ENCODE measurements at regions of chr3 and their contacts with region 1.

Region 1: GRCh38 chr3:839981-840380 is 252.8 kb upstream of the CNTN6 start:
- DNase-seq: no peak
- ATAC-seq: no peak
- H3K4me3 ChIP-seq: no peak overlapping the region
- H3K27ac ChIP-seq: no peak overlapping the region
- H3K4me1 ChIP-seq: no peaks in the 10 kb centered on the region
- H3K27me3 ChIP-seq: no peaks in the 10 kb centered on the region
- CTCF ChIP-seq: no peak
- EP300 ChIP-seq: no peak
- POLR2A ChIP-seq: no peak
- RAD21 ChIP-seq: no peak

Region 2: DNA sequence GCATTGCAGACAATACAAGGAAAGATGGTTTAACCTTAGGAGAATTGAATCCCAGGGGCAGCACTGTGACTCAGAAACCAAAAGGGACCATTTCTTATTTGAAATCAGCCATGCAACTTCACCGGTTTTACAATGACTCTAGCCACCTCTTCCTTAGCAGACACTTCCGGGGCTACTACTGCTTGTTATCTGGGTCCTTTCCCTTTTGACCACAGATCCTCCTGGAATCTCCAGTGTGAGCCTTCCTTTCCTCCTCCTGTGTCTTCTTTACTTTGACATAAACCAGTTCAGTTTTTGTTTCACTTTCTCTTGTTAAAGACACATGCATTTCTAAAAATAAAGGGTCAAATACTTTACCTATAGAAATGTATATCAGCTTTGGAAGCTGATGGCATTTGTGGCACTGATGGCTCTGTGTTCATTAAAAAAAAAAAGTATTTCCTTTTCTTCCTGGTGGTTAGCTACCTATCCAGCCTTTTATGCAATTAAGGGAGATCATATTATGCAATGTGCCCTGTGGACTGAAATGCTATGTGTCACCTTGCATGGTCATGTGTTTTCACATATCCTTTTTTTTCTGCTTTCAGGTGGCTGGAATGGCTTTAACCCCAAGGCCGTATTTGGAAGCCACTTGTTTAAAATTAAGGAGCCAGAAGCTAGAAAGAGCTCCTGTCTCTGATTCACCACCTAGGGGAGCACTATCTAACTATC is 347.2 kb before region 1 on chr3:
- CTCF ChIA-PET with region 1: no interaction called
- POLR2A ChIA-PET with region 1: no interaction called
- RAD21 ChIA-PET with region 1: no interaction called
- SMC1A ChIA-PET with region 1: no interaction called
- in situ Hi-C with region 1: no loop called
- intact Hi-C with region 1: loop called (anchors 10 kb)
- DNase-seq: no peak
- ATAC-seq: peak; percentile 67
- H3K4me3 ChIP-seq: no peak overlapping the region
- H3K27ac ChIP-seq: no peak overlapping the region
- H3K4me1 ChIP-seq: no peaks in the 10 kb centered on the region
- H3K27me3 ChIP-seq: no peaks in the 10 kb centered on the region
- CTCF ChIP-seq: no peak
- EP300 ChIP-seq: no peak
- POLR2A ChIP-seq: no peak
- RAD21 ChIP-seq: no peak

Region 3: GRCh38 chr3:632572-633170 is 207.3 kb before region 1 on chr3:
- CTCF ChIA-PET with region 1: no interaction called
- POLR2A ChIA-PET with region 1: no interaction called
- RAD21 ChIA-PET with region 1: no interaction called
- SMC1A ChIA-PET with region 1: no interaction called
- in situ Hi-C with region 1: no loop called
- intact Hi-C with region 1: no loop called
- DNase-seq: no peak
- ATAC-seq: peak; percentile 79
- H3K4me3 ChIP-seq: no peak overlapping the region
- H3K27ac ChIP-seq: no peak overlapping the region
- H3K4me1 ChIP-seq: no peaks in the 10 kb centered on the region
- H3K27me3 ChIP-seq: no peaks in the 10 kb centered on the region
- CTCF ChIP-seq: peak; percentile 63 to 77 (median 68)
- EP300 ChIP-seq: no peak
- POLR2A ChIP-seq: no peak
- RAD21 ChIP-seq: peak; percentile 75

Measured in GM12878 (cell line).